Right cardiac atrium (tissue), 5 donors: ENCODE measurements at regions of chr14 and their contacts with region 1.

Region 1: DNA sequence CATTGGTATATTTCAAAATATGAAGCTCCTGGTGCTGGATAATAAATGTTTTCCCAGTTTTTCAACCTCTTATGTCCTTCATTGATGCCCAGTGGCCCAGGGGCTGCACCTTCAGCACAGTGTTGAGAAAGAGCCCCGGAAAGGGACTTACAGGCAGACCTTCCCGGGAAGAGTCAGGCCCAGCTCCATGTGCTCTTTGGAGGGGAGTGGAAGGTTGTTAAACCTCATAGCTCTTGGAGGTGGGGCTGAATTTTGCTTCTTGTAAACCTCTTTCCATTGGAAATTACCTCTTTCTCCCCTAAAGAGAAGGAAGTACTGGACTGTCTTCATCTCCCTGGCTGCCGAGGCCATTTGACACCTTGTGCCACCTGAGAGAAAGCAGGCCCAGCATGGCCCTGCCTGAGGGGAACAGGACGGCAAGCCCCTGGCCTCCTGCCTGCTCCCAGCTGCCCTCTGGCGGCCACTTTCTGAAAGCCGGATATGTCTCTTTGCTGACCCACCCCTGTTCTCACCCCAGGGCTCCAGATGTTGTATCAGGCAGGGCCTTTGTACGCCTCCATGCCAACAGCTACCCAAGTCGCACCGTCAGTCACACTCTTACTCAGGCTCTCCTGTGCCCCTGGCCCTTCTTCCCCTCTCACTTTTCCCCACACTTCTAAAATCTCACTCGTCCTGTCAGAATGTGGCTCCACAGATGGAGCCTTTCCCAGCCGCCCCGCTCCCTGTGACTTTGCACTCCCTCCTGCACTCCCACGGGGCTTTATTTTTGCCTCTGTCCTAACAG is 43.0 kb downstream of the EVL start:
- DNase-seq: peak; percentile 87 to 94 (median 93)
- ATAC-seq: peak; percentile 75 to 84
- H3K4me3 ChIP-seq: no peak overlapping the region
- H3K27ac ChIP-seq: no peak overlapping the region
- H3K4me1 ChIP-seq: peaks cover 28% of the 10 kb centered on the region
- H3K27me3 ChIP-seq: no peaks in the 10 kb centered on the region

Region 2: GRCh38 chr14:99982537-99983250 is 125.5 kb before region 1 on chr14:
- intact Hi-C with region 1: loop called (anchors 2 to 5 kb)
- DNase-seq: peak in 2 of 3 donors; percentile 45 to 53
- ATAC-seq: peak; percentile 88 to 89
- H3K4me3 ChIP-seq: no peak overlapping the region
- H3K27ac ChIP-seq: no peak overlapping the region
- H3K4me1 ChIP-seq: no peaks in the 10 kb centered on the region
- H3K27me3 ChIP-seq: no peaks in the 10 kb centered on the region

Region 3: DNA sequence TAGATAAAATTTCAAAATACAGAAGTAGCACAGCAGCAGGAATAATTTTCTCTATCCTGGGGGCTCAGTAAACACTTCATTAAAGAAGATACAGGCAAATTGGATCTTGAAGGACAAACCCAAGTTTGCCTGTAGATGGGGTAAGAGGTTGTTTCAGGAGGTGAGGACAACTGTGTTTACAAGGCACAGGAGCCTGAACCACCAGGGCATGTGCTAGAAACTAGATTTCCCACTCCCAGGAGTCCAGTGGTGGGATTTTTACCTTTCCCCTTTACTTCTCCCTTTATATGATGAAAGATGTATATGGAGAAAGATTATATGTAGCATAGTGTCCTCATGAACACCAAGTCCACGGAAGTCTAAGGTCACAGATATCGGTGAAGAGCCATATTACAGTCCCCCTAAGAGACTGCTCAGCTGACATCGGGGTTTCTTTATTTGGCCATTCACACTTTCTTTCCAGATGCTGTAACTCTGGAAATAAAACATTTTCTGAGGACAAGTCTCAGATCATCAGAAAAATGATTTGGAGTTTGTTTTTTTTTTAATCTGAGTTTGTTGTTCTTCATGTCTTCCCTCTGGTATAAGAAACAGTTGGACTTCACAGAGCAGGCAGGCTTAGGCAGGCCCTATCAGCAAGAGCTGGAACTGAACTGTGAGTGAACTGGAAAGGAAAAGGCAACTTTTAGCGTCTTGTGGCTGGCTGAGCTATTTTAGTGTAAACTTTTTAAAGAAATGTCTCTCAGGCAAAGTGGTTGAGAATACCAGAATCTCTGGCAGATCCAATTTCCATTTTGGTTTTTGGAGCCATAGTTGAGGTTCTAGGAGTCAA is 51.1 kb before region 1 on chr14:
- intact Hi-C with region 1: loop called in 1 of 4 experiments (anchors 10 kb)
- DNase-seq: no peak
- ATAC-seq: peak; percentile 75 to 76
- H3K4me3 ChIP-seq: no peak overlapping the region
- H3K27ac ChIP-seq: peak overlapping the region; percentile 45
- H3K4me1 ChIP-seq: peaks cover 6% of the 10 kb centered on the region
- H3K27me3 ChIP-seq: no peaks in the 10 kb centered on the region

Region 4: DNA sequence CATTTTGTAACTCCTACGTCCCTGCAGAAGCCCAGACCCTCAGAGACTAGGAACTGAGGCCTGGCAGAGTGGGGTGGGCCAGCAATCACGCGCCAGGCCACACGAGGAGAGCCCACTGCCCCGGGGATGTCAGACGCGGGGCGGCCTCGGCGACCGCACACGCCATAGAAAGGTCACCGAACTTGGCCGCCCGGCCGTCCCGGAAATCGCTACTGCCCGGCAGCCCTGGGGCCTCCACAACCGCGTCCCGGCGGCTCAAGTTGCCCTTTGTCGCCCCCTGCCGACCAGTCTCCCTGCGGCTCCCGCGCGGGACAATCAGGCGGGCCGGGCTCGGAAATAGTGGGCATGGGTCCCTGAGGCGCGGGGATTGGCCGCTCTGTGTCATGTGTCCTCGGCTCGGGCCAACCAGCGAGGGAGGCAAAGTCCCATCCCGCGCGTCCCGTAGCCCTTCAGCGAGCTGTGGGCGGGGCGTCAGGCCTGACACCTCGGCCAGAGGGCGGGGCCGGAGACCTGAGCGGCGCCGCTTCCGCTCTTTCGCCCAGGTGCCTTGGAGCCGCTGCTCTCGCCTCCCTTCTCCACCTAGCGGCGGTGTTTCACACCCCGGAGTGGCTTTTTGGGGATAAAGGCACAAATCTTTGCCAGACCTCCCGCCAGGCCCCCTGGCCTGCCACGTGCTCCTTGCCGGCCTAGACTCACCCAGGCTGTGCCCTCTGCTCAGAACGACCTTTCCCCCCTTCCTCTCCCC is 84.6 kb after region 1 on chr14:
- intact Hi-C with region 1: loop called in 1 of 4 experiments (anchors 10 kb)
- DNase-seq: peak; percentile 99 to 100 (median 100)
- ATAC-seq: peak; percentile 99
- H3K4me3 ChIP-seq: peak overlapping the region; percentile 24
- H3K27ac ChIP-seq: peak overlapping the region; percentile 89
- H3K4me1 ChIP-seq: peaks cover 2% of the 10 kb centered on the region
- H3K27me3 ChIP-seq: no peaks in the 10 kb centered on the region

Region 5: GRCh38 chr14:100825713-100826331 is 717.6 kb after region 1 on chr14 and contains the start of gene MEG3:
- intact Hi-C with region 1: no loop called
- DNase-seq: peak; percentile 51 to 84 (median 77)
- ATAC-seq: peak; percentile 74 to 75
- H3K4me3 ChIP-seq: peak within 1 kb of the TSS; percentile 28
- H3K27ac ChIP-seq: no peak within 1 kb of the TSS
- H3K4me1 ChIP-seq: no peaks in the 10 kb centered on the region
- H3K27me3 ChIP-seq: no peaks in the 10 kb centered on the region
- total RNA-seq, gene MEG3: 10.4 to 35.3 (median 18.3) TPM